AG04450 (cell line): ENCODE measurements at regions of chr1 and their contacts with region 1.

Region 1: GRCh38 chr1:154263465-154264332 is 8.7 kb upstream of the HAX1 start:
- DNase-seq: no peak
- H3K4me3 ChIP-seq: no peak overlapping the region
- H3K27ac ChIP-seq: peak overlapping the region; percentile 39
- H3K27me3 ChIP-seq: no peaks in the 10 kb centered on the region
- CTCF ChIP-seq: no peak

Region 2: DNA sequence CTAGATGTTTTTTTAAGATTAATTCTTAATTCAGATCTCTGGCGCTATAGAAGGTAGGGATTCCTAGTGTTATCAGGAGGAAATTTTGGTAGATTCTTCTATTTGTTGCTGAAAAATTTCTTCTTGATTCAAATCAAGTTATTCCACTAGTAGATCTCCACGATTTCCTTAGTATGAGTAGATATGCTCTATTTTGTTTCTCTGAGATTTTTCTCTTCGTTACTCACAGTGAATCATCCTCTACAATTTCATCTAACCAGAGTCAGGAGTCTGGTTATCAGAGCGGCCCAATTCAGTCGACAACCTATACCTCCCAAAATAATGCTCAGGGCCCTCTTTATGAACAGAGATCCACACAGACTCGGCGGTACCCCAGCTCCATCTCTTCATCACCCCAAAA is 10.0 kb before region 1 on chr1:
- CTCF ChIA-PET with region 1: interaction called, 10 read pairs
- POLR2A ChIA-PET with region 1: no interaction called
- DNase-seq: no peak
- H3K4me3 ChIP-seq: no peak overlapping the region
- H3K27ac ChIP-seq: no peak overlapping the region
- H3K27me3 ChIP-seq: no peaks in the 10 kb centered on the region
- CTCF ChIP-seq: no peak

Region 3: GRCh38 chr1:154318386-154318785 is 54.7 kb after region 1 on chr1:
- CTCF ChIA-PET with region 1: no interaction called
- POLR2A ChIA-PET with region 1: no interaction called
- DNase-seq: no peak
- H3K4me3 ChIP-seq: no peak overlapping the region
- H3K27ac ChIP-seq: no peak overlapping the region
- H3K27me3 ChIP-seq: peaks cover 19% of the 10 kb centered on the region
- CTCF ChIP-seq: no peak

Region 4: DNA sequence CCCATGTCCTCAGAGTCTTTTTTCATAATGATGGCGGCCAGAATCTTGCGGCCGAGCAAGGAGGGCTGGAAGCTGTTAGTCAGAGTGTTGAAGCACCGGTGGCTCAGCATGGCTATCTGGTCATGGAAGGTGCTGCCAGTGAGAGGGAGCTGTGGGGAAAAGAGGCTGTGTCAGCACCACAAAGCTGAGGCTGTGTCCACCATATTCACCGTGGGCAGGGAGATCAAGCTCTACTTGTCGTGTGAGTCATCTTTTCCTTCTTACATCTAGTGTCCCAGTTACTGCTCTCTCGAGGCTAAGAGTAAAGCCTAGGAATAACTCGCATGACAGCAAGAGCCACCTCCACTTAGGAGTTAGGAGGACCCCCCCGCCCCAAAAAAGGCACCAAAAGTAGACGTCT is 326.1 kb after region 1 on chr1:
- CTCF ChIA-PET with region 1: no interaction called
- POLR2A ChIA-PET with region 1: interaction called, 10 read pairs
- DNase-seq: no peak
- H3K4me3 ChIP-seq: no peak overlapping the region
- H3K27ac ChIP-seq: no peak overlapping the region
- H3K27me3 ChIP-seq: no peaks in the 10 kb centered on the region
- CTCF ChIP-seq: no peak